ENCODE measurements at regions of chr15 and their contacts with region 1.

Region 1: DNA sequence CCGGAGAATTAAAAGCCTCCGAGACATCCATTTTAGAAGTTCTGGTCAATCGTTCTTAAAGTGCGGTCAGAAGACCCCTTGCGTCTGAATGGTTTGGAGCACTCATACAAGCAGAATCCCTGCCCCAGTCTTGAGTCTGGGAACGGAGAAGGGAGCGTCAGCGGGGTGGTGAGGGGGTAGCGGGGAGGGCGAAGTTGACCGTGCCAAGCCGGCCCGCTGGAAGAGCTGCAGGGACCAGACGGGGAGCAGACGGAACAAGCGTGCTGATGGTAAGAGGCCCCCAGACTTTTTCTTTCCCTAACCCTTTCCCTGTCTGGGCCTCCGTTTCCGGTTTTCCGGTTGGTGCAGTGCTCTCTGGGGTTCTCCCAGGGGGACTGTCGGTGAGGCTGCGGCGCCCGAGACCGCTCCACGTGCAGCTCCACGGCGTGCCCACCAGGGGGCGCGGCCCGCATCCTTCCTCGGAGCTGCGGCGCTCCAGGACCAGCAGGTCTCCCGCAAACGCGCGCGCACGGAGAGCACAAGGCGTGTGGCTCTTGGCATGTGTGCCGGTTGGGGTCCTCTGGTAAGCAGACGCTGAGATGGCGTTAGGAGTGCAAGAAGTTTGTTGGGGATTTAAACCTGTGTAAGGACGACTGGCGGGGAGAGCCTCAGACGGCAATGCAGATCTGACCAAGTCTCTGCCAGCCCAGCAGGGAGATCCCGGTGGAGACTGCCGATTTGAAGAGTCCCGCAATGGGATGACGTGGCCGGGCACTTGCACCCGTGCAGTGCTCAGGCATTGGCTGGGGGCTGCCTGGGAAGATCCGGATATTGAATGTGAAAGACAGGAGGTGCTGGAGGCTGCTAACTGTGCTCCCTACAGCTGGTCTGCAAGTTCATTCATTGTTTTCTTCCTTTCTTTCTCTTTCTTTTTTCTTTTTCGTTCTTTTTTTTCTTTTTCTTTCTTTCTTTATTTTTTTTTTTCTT is 19.2 kb upstream of the CORO2B start:
- DNase-seq: peak; percentile 89
- H3K4me3 ChIP-seq: peak overlapping the region; percentile 70
- H3K27ac ChIP-seq: no peak overlapping the region
- H3K4me1 ChIP-seq: no peaks in the 10 kb centered on the region
- H3K27me3 ChIP-seq: no peaks in the 10 kb centered on the region

Region 2: GRCh38 chr15:66720206-66721006 is 1839.2 kb before region 1 on chr15:
- in situ Hi-C with region 1: no loop called
- DNase-seq: peak; percentile 97
- H3K4me3 ChIP-seq: no peak overlapping the region
- H3K27ac ChIP-seq: peak overlapping the region; percentile 85
- H3K4me1 ChIP-seq: peaks cover 42% of the 10 kb centered on the region
- H3K27me3 ChIP-seq: no peaks in the 10 kb centered on the region

Region 3: GRCh38 chr15:68875377-68876116 is 315.9 kb after region 1 on chr15:
- in situ Hi-C with region 1: loop called (anchors 10 kb)
- DNase-seq: peak; percentile 91
- H3K4me3 ChIP-seq: peak overlapping the region; percentile 69
- H3K27ac ChIP-seq: no peak overlapping the region
- H3K4me1 ChIP-seq: no peaks in the 10 kb centered on the region
- H3K27me3 ChIP-seq: peaks cover 29% of the 10 kb centered on the region

Measured in GM23248 (cell line).